ENCODE measurements at regions of chr12 and their contacts with region 1.

Region 1: GRCh38 chr12:123743002-123743401 is 19.1 kb upstream of the DNAH10 start:
- DNase-seq: no peak
- ATAC-seq: no peak
- H3K4me3 ChIP-seq: no peak overlapping the region
- H3K27ac ChIP-seq: no peak overlapping the region
- H3K4me1 ChIP-seq: no peaks in the 10 kb centered on the region
- H3K27me3 ChIP-seq: no peaks in the 10 kb centered on the region
- CTCF ChIP-seq: no peak

Region 2: DNA sequence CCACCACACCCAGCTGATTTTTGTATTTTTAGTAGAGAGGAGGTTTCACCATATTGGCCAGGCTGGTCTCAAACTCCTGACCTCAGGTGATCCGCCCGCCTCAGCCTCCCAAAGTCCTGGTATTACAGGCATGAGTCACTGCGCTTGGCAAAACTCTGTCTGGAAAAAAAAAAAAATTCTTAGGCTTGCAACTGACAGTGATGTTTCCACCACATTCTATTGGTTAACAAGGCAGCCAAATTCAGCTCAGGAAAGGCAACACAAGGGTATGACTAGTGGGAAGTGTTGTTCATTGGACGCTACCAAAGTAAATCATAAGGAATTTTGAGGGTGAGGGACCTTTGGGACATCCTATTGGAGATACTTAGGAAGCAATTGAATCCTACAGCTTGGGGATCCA is 375.5 kb before region 1 on chr12:
- CTCF ChIA-PET with region 1: no interaction called
- POLR2A ChIA-PET with region 1: no interaction called
- intact Hi-C with region 1: no loop called
- DNase-seq: no peak
- ATAC-seq: no peak
- H3K4me3 ChIP-seq: no peak overlapping the region
- H3K27ac ChIP-seq: no peak overlapping the region
- H3K4me1 ChIP-seq: peaks cover 8% of the 10 kb centered on the region
- H3K27me3 ChIP-seq: no peaks in the 10 kb centered on the region
- CTCF ChIP-seq: no peak

Region 3: GRCh38 chr12:123502163-123502704 is 240.8 kb before region 1 on chr12:
- CTCF ChIA-PET with region 1: no interaction called
- POLR2A ChIA-PET with region 1: no interaction called
- intact Hi-C with region 1: no loop called
- DNase-seq: no peak
- ATAC-seq: no peak
- H3K4me3 ChIP-seq: no peak overlapping the region
- H3K27ac ChIP-seq: no peak overlapping the region
- H3K4me1 ChIP-seq: no peaks in the 10 kb centered on the region
- H3K27me3 ChIP-seq: no peaks in the 10 kb centered on the region
- CTCF ChIP-seq: no peak

Region 4: GRCh38 chr12:123643911-123644310 is 99.1 kb before region 1 on chr12:
- CTCF ChIA-PET with region 1: no interaction called
- POLR2A ChIA-PET with region 1: no interaction called
- intact Hi-C with region 1: no loop called
- DNase-seq: no peak
- ATAC-seq: no peak
- H3K4me3 ChIP-seq: no peak overlapping the region
- H3K27ac ChIP-seq: no peak overlapping the region
- H3K4me1 ChIP-seq: no peaks in the 10 kb centered on the region
- H3K27me3 ChIP-seq: no peaks in the 10 kb centered on the region
- CTCF ChIP-seq: no peak

Region 5: GRCh38 chr12:123655420-123655819 is 87.6 kb before region 1 on chr12:
- CTCF ChIA-PET with region 1: no interaction called
- POLR2A ChIA-PET with region 1: no interaction called
- intact Hi-C with region 1: no loop called
- DNase-seq: no peak
- ATAC-seq: no peak
- H3K4me3 ChIP-seq: no peak overlapping the region
- H3K27ac ChIP-seq: no peak overlapping the region
- H3K4me1 ChIP-seq: peaks cover 11% of the 10 kb centered on the region
- H3K27me3 ChIP-seq: no peaks in the 10 kb centered on the region
- CTCF ChIP-seq: no peak

Region 6: DNA sequence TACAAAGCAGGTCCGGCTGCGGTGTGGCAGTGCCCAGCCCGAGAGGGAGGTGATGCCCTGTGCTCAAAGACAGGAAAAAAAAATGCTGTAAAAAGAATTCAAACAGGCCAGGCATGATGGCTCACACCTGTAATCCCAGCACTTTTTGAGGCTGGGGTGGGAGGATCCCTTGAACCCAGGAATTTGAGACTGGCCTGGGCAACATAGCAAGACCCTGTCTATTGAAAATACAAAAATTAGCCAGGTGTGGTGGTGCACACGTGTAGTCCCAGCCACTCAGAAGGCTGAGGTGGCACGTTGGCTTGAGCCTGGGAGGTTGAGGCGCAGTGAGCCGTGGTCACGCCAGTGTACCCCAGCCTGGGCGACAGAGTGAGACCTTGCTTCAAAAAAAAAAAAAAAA is 45.5 kb after region 1 on chr12:
- CTCF ChIA-PET with region 1: no interaction called
- POLR2A ChIA-PET with region 1: interaction called, 27 read pairs
- intact Hi-C with region 1: no loop called
- DNase-seq: no peak
- ATAC-seq: no peak
- H3K4me3 ChIP-seq: no peak overlapping the region
- H3K27ac ChIP-seq: no peak overlapping the region
- H3K4me1 ChIP-seq: no peaks in the 10 kb centered on the region
- H3K27me3 ChIP-seq: peaks cover 9% of the 10 kb centered on the region; the same call in 1 of the 2 replicates
- CTCF ChIP-seq: no peak